ENCODE measurements at regions of chr7 and their contacts with region 1.

Region 1: GRCh38 chr7:55255496-55256435 is 109.4 kb upstream of the LANCL2 start:
- DNase-seq: peak; percentile 71
- ATAC-seq: peak; percentile 91
- H3K4me3 Mint-ChIP-seq: peak overlapping the region; percentile 74
- H3K27ac Mint-ChIP-seq: no peak overlapping the region
- H3K4me1 Mint-ChIP-seq: peaks cover 12% of the 10 kb centered on the region
- H3K27me3 Mint-ChIP-seq: peaks cover 41% of the 10 kb centered on the region

Region 2: DNA sequence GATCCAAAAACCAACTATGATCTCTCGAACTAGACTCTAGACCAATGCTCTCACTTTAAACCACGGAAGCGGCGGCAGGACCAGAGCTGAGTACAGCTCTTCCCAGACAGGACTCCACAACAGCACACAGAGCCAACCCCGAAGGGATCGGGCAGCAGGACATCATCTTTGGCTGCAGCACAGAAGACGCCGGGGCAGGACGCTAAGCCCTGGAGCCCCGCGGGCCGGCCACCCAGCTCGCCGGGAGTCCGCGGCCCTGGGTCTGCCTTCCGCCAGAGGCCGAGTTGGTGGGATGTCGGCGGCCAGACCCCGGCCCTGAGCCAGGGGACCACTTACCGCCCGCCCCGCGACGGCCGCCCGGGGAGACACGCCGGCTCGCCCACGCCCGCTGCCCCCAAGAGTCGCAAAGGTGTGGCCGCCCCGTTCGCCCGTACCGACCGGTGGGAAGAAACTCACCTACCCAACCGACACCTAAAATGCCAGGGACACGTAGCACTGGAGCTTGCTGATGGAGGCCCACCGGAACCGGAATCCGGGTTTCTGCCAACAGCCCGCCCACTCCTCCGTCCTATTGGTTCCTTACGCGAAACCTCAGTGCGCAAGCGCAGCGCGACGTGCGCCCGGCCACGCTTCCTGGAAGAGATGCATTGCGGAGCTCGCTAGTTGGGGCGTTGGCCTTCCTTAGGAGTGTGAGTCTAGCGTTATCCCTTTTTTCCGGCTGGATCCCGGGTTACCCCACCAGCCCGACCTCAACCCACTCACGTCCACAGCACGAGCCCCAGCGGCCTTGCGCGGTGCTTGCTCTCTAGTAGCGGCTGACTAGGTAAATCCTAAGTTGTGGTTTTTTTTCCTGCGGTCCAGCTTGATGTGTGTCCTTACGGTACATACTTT is 496.8 kb before region 1 on chr7 and contains the start of gene SEC61G:
- CTCF ChIA-PET with region 1: interaction called, 27 read pairs
- POLR2A ChIA-PET with region 1: no interaction called
- DNase-seq: peak; percentile 97
- ATAC-seq: peak; percentile 98
- H3K4me3 Mint-ChIP-seq: peak within 1 kb of the TSS; percentile 100
- H3K27ac Mint-ChIP-seq: peak within 1 kb of the TSS; percentile 98
- H3K4me1 Mint-ChIP-seq: peaks cover 24% of the 10 kb centered on the region
- H3K27me3 Mint-ChIP-seq: peaks cover 14% of the 10 kb centered on the region
- total RNA-seq, gene SEC61G: 101 to 123 TPM

Region 3: GRCh38 chr7:54773472-54774399 is 482.0 kb before region 1 on chr7:
- CTCF ChIA-PET with region 1: interaction called, 60 read pairs
- POLR2A ChIA-PET with region 1: no interaction called
- DNase-seq: peak; percentile 72
- ATAC-seq: peak; percentile 75
- H3K4me3 Mint-ChIP-seq: peak overlapping the region; percentile 63
- H3K27ac Mint-ChIP-seq: no peak overlapping the region
- H3K4me1 Mint-ChIP-seq: peaks cover 3% of the 10 kb centered on the region
- H3K27me3 Mint-ChIP-seq: peaks cover 27% of the 10 kb centered on the region

Region 4: DNA sequence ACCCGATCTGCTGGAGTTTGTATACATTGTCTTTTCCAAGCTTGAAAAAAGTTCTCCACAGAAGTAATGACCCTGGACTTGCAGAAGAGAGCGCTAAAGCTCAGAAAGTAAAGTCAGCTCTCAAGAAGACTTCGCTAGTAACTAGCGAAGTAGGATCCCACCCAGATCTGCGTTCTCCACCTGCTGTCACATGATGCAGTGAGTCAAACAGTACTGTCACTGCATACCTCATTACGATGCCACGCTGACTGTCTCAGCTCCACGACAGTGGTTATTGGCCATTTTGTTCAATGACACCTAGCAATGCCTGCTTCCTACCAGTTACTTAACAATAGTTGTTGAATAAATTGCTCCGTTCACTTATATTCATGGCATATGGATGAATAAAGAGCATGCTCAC is 467.1 kb before region 1 on chr7:
- CTCF ChIA-PET with region 1: interaction called, 26 read pairs
- POLR2A ChIA-PET with region 1: no interaction called
- DNase-seq: peak; percentile 24
- ATAC-seq: no peak
- H3K4me3 Mint-ChIP-seq: no peak overlapping the region
- H3K27ac Mint-ChIP-seq: no peak overlapping the region
- H3K4me1 Mint-ChIP-seq: peaks cover 4% of the 10 kb centered on the region
- H3K27me3 Mint-ChIP-seq: peaks cover 8% of the 10 kb centered on the region

Region 5: DNA sequence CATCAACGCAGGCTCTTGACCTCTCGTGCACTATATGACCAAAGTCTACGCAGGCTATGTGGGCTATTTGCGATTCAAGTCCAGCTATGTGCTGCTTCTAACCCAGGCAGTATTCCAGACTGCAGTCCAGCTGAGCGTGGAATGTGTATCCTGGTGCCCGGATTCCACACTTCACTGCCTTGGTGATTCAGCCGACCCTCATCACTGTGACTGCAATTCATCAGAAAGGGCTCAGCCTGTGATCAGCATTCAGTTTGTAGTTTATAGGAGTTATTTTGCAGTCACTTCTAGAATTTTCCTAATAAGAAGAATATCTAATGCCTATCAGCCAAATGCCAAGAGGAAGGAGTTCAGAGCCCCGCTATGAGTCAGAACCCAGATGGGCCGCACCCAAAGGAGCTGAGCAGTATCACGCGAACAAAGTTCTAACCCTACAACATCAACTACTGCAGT is 10.5 kb before region 1 on chr7:
- CTCF ChIA-PET with region 1: interaction called, 18 read pairs
- POLR2A ChIA-PET with region 1: no interaction called
- DNase-seq: peak; percentile 15
- ATAC-seq: no peak
- H3K4me3 Mint-ChIP-seq: no peak overlapping the region
- H3K27ac Mint-ChIP-seq: no peak overlapping the region
- H3K4me1 Mint-ChIP-seq: no peaks in the 10 kb centered on the region
- H3K27me3 Mint-ChIP-seq: no peaks in the 10 kb centered on the region

Region 6: DNA sequence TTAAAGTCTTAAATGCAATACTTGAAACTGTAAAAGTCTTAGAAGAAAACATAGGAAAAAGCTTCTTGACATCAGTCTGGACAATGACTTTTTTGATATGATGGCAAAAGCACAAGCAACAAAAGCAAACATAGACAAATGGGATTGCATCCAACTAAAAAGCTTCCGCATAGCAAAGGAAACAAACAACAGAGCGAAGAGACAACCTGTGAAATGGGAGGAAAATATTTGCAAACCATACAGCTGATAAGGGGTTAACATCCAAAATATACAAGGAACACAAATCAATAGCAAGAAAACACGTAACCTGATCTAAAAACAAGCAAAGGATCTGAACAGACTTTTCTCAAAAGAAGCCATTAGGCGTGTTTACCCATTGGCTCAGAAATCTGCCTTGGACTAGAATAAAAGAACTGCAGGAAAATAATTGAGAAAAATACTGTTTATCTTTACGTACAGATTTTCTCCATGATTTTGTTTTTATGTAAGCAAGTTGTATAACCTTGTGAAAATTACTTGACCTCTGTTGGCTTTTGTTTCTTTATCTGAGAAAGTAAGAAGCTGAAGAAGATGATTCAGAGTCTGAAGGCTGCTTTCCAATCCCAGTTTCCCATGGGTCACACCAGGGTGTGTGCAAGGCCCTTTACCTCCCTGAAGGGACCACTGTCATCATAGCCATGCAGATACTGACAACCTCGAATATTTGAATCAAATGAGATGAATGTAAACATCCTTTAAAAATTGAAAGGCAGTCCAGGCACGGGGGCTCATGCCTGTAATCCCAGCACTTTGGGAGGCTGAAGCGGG is 10.3 kb after region 1 on chr7:
- CTCF ChIA-PET with region 1: interaction called, 18 read pairs
- POLR2A ChIA-PET with region 1: no interaction called
- DNase-seq: no peak
- ATAC-seq: no peak
- H3K4me3 Mint-ChIP-seq: no peak overlapping the region
- H3K27ac Mint-ChIP-seq: no peak overlapping the region
- H3K4me1 Mint-ChIP-seq: no peaks in the 10 kb centered on the region
- H3K27me3 Mint-ChIP-seq: peaks cover 23% of the 10 kb centered on the region

Measured in activated CD8-positive, alpha-beta T cell treated with anti-CD3 and anti-CD28 coated beads, Interleukin-2, amount 10 ng/mL, durations not matched to agents 7 days and 5 days (primary cell).